AG04449 (cell line): ENCODE measurements at regions of chr22 and their contacts with region 1.

Region 1: DNA sequence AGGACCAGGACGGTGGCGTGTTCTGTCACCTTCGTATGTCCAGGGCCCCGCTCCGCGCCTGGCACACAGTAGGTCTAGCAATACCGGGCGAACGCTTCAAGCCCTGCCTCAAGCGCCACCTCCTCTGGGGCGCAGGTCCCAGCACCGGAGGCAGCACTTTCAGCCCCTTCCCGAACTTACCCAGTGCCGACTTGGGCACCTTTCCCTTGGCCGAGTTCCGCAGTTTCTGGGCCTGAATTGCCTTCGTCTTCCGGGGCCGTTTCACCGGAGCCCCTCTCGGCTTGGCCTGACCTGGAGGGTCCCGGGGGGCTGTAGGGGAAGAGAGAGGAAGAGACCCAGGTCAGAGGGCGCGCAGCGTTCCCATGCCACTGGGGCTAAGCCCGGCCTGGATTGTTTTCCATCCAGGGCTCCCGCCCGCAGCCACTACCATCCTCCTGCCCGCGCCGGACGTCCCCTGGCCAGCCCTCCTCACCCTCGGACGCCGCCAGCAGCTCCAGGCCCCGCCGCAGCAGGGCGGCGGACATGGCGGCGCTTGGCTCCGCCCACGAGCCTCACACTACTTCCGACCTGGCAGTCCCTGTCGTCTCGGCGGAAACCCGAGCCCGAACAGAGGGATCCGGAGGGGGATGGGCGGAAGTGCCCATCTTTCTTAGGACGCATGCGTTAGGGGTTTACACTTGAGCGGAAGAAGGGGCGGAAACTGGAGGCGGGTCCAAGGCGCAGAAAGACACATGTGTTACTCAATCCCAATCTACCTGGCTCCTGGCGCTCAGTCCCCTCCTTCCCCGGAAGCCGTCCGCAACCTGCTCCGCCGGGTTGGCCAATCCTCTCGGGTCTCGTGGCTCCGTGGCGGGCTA is at the start of gene RPS19BP1:
- DNase-seq: peak; percentile 96
- H3K4me3 ChIP-seq: peak within 1 kb of the TSS; percentile 96
- CTCF ChIP-seq: no peak

Region 2: DNA sequence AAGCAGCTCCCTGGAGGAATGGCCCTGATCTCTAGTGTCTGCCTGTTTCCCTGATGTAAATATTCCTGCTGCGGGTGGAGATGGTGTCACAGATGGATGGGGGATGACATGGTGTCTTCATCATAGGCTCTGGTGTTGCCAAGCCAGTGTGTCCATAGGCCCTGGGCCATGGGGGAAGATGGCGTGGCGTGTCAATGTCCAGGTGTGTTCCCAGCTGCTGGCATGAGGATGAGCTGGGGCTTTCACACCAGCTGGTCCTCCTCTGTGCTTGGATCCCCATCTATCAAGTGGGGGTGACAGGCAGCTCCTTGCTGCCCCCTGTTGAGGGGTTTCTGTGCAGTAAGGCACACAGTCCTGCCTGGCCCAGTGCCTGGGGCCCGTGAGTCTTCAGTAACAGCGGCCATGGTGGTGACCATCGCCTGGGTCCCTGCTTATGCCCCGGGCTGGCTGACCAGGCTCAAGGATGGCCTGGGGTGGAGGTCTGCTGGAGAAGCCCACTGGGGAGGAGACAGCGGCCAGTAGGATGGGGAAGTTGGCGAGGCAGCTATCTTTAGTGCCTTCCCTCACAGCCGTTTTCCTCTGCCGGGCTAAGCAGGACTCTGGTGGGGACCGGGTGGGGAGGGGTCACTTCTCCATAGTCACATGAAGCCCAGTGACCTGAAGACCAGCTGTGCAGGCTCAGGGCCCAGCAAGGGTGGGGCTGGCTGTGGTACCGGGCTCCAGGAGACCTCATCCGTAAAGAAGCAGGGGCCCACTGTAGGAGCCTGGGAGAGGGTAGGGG is 225.7 kb before region 1 on chr22:
- CTCF ChIA-PET with region 1: interaction called, 15 read pairs
- POLR2A ChIA-PET with region 1: no interaction called
- DNase-seq: no peak
- H3K4me3 ChIP-seq: no peak overlapping the region
- CTCF ChIP-seq: peak; percentile 4

Region 3: GRCh38 chr22:39395936-39396796 is 136.3 kb before region 1 on chr22:
- CTCF ChIA-PET with region 1: interaction called, 13 read pairs
- POLR2A ChIA-PET with region 1: no interaction called
- DNase-seq: no peak
- H3K4me3 ChIP-seq: no peak overlapping the region
- CTCF ChIP-seq: no peak

Region 4: GRCh38 chr22:39502109-39502788 is 30.2 kb before region 1 on chr22 and contains the start of gene MIEF1:
- CTCF ChIA-PET with region 1: interaction called, 222 read pairs
- POLR2A ChIA-PET with region 1: interaction called, 10 read pairs
- DNase-seq: peak; percentile 63
- H3K4me3 ChIP-seq: peak within 1 kb of the TSS; percentile 75
- CTCF ChIP-seq: peak; percentile 18

Region 5: DNA sequence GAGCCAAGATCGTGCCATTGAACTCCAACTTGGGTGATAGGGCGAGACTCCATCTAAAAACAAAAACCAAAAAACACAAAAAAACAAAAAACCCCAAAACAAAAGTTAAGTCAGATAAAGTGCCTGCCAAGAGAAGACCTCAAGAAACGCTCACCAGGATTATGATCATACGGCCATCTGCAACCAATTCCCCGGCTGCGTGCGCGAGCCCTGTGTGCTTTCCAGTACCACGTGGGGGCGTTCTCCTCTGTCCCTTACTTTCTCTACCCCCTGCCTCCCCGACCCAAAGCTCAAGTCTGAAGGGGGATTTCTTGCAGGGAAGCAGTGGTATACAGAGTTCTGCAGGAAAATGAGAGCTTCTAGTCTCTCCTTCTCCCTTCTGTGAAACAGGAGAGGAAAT is 10.7 kb after region 1 on chr22:
- CTCF ChIA-PET with region 1: interaction called, 35 read pairs
- POLR2A ChIA-PET with region 1: no interaction called
- DNase-seq: no peak
- H3K4me3 ChIP-seq: no peak overlapping the region
- CTCF ChIP-seq: peak; percentile 58

Region 6: GRCh38 chr22:40036591-40037225 is 504.3 kb after region 1 on chr22:
- CTCF ChIA-PET with region 1: interaction called, 1,079 read pairs
- POLR2A ChIA-PET with region 1: no interaction called
- DNase-seq: no peak
- H3K4me3 ChIP-seq: no peak overlapping the region
- CTCF ChIP-seq: peak; percentile 90